ENCODE measurements at regions of chr15 and their contacts with region 1.

Region 1: GRCh38 chr15:40405501-40406381 is at the start of gene IVD:
- DNase-seq: peak; percentile 87
- ATAC-seq: peak; percentile 99
- H3K4me3 ChIP-seq: peak within 1 kb of the TSS; percentile 75 to 92 (median 89)
- H3K27ac ChIP-seq: peak within 1 kb of the TSS; percentile 61
- H3K4me1 ChIP-seq: peaks cover 25% of the 10 kb centered on the region
- H3K27me3 ChIP-seq: no peaks in the 10 kb centered on the region
- CTCF ChIP-seq: no peak
- EP300 ChIP-seq: 0 out of 4 replicates have a peak, but pooled peaks of 1 of the 2 experiments have one; percentile 36
- POLR2A ChIP-seq: peak; percentile 86 to 96
- RAD21 ChIP-seq: peak; percentile 30; the same call in 1 of the 2 replicates
- total RNA-seq, gene IVD: 48.0 and 61.3 TPM in 2 replicates

Region 2: DNA sequence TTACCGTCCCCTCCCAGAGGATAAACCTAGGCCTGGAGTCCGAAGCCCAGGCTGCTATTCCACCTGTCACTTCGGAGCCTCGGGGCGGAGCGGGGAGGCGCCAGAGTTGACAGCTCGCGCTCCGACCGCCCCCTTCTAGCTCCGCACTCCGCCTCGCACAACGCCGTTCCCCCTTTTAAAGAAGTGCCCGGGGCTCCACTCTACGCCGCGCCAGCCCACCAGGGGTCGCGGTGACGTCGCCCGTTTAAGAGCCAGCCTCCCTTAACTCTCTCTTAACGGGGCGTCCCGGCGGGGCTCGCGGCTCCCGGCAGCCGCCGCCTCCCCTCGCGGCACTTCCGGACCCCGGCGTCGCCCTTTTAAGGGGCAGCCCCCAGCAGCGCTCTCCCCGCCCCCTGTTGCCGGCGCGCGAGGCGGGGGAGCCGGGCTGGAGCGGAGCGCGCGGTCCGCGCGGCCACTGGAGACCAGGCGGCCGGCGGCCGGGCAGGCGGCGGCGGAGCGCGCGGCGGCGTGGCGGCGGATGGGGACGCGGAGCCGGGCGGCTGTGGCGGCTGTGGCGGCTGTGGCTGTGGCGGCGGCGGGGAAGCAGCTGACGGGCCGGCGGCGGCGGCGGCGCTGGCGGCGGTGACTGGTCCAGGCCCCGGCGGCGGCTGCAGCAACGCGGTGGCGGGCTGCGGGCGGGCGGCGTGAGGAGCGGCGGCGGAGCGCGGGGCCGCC is 82.3 kb before region 1 on chr15 and contains the start of gene INAFM2:
- CTCF ChIA-PET with region 1: no interaction called
- POLR2A ChIA-PET with region 1: interaction called, 11 read pairs
- in situ Hi-C with region 1: no loop called
- intact Hi-C with region 1: no loop called
- DNase-seq: peak; percentile 89
- ATAC-seq: peak; percentile 94
- H3K4me3 ChIP-seq: peak within 1 kb of the TSS; percentile 36 to 75 (median 75); a peak in 5 of 6 replicates
- H3K27ac ChIP-seq: no peak within 1 kb of the TSS
- H3K4me1 ChIP-seq: peaks cover 48% of the 10 kb centered on the region
- H3K27me3 ChIP-seq: peaks cover 0 to 7% of the 10 kb centered on the region in 2 experiments; a peak in 1 of 5 replicates
- CTCF ChIP-seq: peak; percentile 72
- EP300 ChIP-seq: no peak
- POLR2A ChIP-seq: no peak
- RAD21 ChIP-seq: peak; percentile 48; the same call in 1 of the 2 replicates
- total RNA-seq, gene INAFM2: 6.5 and 8.1 TPM in 2 replicates

Region 3: DNA sequence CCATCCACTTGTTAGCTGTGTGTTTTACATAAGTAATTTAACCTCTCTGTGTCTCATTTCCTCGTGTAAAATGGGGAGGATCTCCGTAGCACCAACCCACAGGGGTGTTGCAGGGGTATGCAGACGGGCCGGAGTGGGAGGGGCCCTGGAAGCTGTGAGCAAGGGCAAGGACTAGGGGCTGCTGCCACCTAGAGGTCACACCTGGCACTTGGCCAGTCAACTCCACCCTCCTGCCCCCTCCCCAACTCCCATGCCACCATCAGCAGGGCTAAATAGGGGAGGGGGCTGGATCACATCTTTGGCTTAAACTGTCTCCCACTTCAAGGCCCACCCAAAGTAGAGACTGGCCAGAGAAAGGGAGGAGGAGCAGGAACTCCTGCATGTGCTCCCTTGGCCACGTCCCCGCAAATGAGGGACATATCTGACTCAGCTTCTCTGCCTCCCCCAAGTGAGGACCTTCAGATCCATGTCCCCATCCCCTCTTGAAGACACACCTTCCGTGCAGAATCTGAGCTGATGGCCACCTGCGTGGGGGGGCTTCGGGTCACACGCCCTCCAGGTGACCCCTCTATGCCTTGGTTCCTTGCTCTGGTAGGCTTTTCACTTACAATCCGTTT is 67.6 kb before region 1 on chr15:
- CTCF ChIA-PET with region 1: no interaction called
- POLR2A ChIA-PET with region 1: interaction called, 18 read pairs
- in situ Hi-C with region 1: no loop called
- intact Hi-C with region 1: no loop called
- DNase-seq: peak; percentile 58
- ATAC-seq: peak; percentile 51
- H3K4me3 ChIP-seq: no peak overlapping the region
- H3K27ac ChIP-seq: no peak overlapping the region
- H3K4me1 ChIP-seq: peaks cover 46% of the 10 kb centered on the region
- H3K27me3 ChIP-seq: no peaks in the 10 kb centered on the region
- CTCF ChIP-seq: peak; percentile 91
- EP300 ChIP-seq: no peak
- POLR2A ChIP-seq: no peak; a peak in 1 of 4 replicates
- RAD21 ChIP-seq: peak; percentile 76

Region 4: DNA sequence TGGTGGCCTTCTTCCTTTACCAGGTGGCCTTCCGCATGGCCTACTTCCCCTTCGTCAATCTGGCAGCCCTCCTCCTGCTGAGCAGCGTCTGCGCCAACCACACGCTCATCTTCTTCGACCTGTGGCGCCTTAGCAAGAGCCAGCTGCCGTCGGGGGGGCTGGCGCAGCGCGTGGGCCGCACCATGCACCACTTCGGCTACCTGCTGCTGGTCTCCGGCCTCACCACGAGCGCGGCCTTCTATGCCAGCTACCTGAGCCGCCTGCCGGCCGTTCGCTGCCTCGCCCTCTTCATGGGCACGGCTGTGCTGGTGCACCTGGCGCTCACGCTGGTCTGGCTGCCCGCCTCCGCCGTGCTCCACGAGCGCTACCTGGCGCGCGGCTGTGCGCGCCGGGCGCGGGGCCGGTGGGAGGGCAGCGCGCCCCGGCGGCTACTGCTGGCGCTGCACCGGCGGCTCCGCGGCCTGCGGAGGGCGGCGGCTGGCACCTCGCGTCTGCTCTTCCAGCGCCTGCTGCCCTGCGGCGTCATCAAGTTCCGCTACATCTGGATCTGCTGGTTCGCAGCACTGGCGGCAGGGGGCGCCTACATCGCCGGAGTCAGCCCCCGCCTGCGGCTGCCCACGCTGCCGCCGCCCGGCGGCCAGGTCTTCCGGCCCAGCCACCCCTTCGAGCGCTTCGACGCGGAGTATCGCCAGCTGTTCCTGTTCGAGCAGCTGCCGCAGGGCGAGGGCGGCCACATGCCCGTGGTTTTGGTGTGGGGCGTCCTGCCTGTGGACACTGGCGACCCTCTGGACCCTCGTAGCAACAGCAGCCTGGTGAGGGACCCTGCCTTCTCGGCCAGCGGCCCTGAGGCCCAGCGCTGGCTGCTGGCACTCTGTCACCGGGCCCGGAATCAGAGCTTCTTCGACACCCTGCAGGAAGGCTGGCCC is 37.8 kb before region 1 on chr15:
- CTCF ChIA-PET with region 1: no interaction called
- POLR2A ChIA-PET with region 1: interaction called, 16 read pairs
- in situ Hi-C with region 1: no loop called
- intact Hi-C with region 1: no loop called
- DNase-seq: peak; percentile 75
- ATAC-seq: peak; percentile 83
- H3K4me3 ChIP-seq: peak overlapping the region in 1 of 3 experiments; percentile 43; a peak in 1 of 6 replicates
- H3K27ac ChIP-seq: no peak overlapping the region
- H3K4me1 ChIP-seq: no peaks in the 10 kb centered on the region
- H3K27me3 ChIP-seq: peaks cover 14 to 84% of the 10 kb centered on the region in 2 experiments
- CTCF ChIP-seq: peak; percentile 88
- EP300 ChIP-seq: no peak
- POLR2A ChIP-seq: no peak
- RAD21 ChIP-seq: peak; percentile 94

Region 5: DNA sequence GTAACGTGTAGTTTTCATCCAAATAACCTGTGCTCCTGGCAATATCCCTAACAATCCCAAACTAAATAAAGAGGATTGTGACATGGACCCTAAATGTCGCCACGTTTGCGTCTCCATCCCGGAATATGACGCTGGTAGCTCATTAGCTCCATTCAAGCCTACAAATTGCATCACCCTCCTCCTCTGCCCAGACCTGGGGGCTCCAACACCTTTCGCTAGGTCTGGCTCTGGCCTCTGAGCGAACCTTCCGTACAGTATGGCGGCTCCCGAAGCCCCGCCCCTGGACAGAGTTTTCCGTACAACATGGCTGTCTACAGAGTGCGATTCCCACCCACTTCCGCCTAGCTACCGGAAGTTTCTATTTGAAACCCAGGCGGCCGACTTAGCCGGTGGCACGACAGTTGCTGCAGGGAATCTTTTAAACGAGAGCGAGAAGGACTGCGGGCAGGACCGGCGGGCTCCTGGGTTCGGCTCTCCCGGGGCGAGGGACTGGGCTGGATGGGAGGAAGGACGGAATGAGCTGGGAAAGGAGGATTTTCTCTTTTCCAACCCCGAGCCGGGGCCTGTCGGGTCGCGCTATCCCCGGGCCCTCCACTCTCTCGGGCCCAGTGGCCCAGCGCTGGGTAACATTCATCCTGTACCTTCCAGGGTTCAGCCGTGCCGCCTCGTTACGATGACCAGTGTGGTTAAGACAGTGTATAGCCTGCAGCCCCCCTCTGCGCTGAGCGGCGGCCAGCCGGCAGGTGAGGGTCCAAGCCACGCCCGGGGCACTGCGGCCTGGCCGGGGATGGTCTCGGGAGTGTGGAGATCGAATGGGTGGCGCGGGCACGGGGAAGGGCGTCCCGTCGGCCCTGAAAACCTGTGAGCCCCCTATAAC is 22.9 kb before region 1 on chr15 and contains the start of gene KNSTRN:
- CTCF ChIA-PET with region 1: no interaction called
- POLR2A ChIA-PET with region 1: interaction called, 19 read pairs
- in situ Hi-C with region 1: no loop called
- intact Hi-C with region 1: loop called (anchors 2 kb)
- DNase-seq: peak; percentile 91
- ATAC-seq: peak; percentile 99
- H3K4me3 ChIP-seq: peak within 1 kb of the TSS; percentile 73 to 92 (median 79)
- H3K27ac ChIP-seq: peak within 1 kb of the TSS; percentile 66
- H3K4me1 ChIP-seq: peaks cover 40% of the 10 kb centered on the region
- H3K27me3 ChIP-seq: no peaks in the 10 kb centered on the region; a peak in 1 of 5 replicates
- CTCF ChIP-seq: 0 out of 2 replicates have a peak, but pooled peaks have one; percentile 3
- EP300 ChIP-seq: 0 out of 4 replicates have a peak, but pooled peaks of 1 of the 2 experiments have one; percentile 8
- POLR2A ChIP-seq: peak; percentile 41 to 58; a peak in 2 of 4 replicates
- RAD21 ChIP-seq: 0 out of 2 replicates have a peak, but pooled peaks have one; percentile 33
- total RNA-seq, gene KNSTRN: 62.3 and 82.1 TPM in 2 replicates

Region 6: DNA sequence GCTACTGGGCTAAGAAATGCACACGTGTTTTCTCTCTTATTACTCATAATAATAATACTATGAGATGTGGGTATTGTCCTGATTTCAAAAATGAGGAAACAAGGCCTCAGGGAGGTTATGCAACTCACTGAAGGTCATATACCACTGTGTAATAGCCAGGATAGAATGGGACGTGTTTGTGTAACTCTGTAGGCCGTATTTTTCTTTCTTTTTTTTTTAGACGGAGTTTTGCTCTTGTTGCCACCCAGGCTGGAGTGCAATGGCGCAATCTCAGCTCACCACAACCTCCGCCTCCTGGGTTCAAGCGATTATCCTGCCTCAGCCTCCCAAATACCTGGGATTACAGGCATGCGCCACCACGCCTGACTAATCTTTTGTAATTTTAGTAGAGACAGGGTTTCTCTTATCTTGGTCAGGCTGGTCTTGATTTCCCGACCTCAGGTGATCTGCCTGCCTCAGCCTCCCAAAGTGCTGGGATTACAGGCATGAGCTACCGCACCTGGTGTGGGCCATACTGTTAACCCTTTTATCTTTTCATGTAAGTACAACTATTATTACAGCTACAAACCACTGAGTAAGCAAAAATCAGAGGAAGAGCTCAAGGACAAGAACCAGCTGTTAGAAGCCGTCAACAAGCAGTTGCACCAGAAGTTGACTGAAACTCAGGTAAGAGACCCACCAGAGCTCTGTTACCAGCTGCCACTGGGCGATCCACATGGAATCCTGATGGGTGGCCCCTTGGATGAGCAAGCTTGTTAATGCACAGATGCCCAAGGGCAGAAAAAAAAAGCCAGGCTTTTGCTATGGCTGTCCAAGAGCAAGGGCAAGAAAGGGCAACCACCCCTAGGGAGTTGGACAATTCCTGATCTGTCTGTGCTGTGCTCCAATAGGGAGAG is 16.5 kb before region 1 on chr15:
- CTCF ChIA-PET with region 1: no interaction called
- POLR2A ChIA-PET with region 1: interaction called, 11 read pairs
- in situ Hi-C with region 1: no loop called
- intact Hi-C with region 1: no loop called
- DNase-seq: peak; percentile 54
- ATAC-seq: peak; percentile 68
- H3K4me3 ChIP-seq: no peak overlapping the region
- H3K27ac ChIP-seq: peak overlapping the region; percentile 45
- H3K4me1 ChIP-seq: peaks cover 11% of the 10 kb centered on the region
- H3K27me3 ChIP-seq: no peaks in the 10 kb centered on the region
- CTCF ChIP-seq: no peak
- EP300 ChIP-seq: no peak
- POLR2A ChIP-seq: no peak
- RAD21 ChIP-seq: no peak

Region 7: GRCh38 chr15:40440743-40441564 is 35.2 kb after region 1 on chr15 and contains the start of gene BAHD1:
- CTCF ChIA-PET with region 1: no interaction called
- POLR2A ChIA-PET with region 1: interaction called, 15 read pairs
- in situ Hi-C with region 1: no loop called
- intact Hi-C with region 1: no loop called
- DNase-seq: peak; percentile 85
- ATAC-seq: peak; percentile 78
- H3K4me3 ChIP-seq: peak within 1 kb of the TSS; percentile 72 to 88 (median 81)
- H3K27ac ChIP-seq: peak within 1 kb of the TSS; percentile 75
- H3K4me1 ChIP-seq: peaks cover 64% of the 10 kb centered on the region
- H3K27me3 ChIP-seq: peaks cover 2 to 41% of the 10 kb centered on the region in 2 experiments; a peak in 4 of 5 replicates
- CTCF ChIP-seq: peak; percentile 30
- EP300 ChIP-seq: no peak
- POLR2A ChIP-seq: 0 out of 4 replicates have a peak, but pooled peaks of 1 of the 2 experiments have one; percentile 49
- RAD21 ChIP-seq: no peak
- total RNA-seq, gene BAHD1: 8.1 and 8.7 TPM in 2 replicates

Measured in HepG2 (cell line).